CD4-positive, alpha-beta T cell (primary cell): ENCODE measurements at regions of chr2 and their contacts with region 1.

Region 1: GRCh38 chr2:143128681-143129580 is at the start of gene ARHGAP15:
- DNase-seq: peak; percentile 55 to 93 (median 67)
- ATAC-seq: peak; percentile 85
- H3K4me3 ChIP-seq: peak within 1 kb of the TSS; percentile 58
- H3K4me3 Mint-ChIP-seq: peak within 1 kb of the TSS; percentile 85
- H3K27ac ChIP-seq: peak within 1 kb of the TSS; percentile 78 to 94
- H3K27ac Mint-ChIP-seq: no peak within 1 kb of the TSS
- H3K4me1 ChIP-seq: peaks cover 52% of the 10 kb centered on the region
- H3K4me1 Mint-ChIP-seq: peaks cover 44% of the 10 kb centered on the region
- H3K27me3 ChIP-seq: no peaks in the 10 kb centered on the region
- H3K27me3 Mint-ChIP-seq: no peaks in the 10 kb centered on the region
- CTCF ChIP-seq: peak; percentile 25
- total RNA-seq, gene ARHGAP15: 158 to 165 TPM

Region 2: DNA sequence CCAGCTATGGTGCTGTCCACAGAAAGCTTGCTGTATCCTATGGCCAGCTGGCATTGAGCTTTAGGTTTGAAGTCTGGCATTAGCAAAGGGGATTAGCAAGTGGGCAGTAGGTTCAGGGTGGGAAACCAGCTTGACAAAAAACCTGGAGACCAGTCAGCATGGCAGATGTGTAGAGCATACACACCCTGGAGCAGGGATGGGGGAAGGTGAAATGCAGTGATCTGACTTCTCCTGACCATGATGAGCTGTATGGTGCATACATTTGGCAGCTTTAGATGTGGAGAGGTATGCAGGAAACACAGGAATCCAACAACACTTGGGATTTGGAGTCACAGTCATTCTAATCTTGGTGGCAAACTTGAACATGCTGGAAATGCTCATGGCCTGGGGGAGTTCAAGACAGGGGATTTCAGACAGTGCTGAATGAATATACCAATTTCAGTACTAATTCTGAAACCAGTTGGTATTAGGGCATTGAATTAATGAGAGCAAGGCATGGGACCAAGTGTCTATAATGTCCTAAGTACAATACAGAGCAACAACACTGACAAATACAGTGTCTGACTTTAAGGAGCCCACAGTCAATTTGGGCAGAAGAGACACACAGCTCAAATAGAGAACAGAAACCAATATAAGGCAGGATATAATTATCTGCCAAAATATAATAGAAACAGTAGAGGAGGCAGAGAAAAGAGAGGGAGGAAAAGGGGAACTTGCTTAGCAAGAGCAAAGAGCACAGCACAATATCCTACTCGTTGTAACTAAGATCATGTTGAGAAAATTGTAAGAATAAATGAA is 12.1 kb after region 1 on chr2:
- CTCF ChIA-PET with region 1: interaction called, 9 read pairs
- POLR2A ChIA-PET with region 1: interaction called, 99 read pairs
- intact Hi-C with region 1: no loop called
- DNase-seq: no peak
- ATAC-seq: no peak
- H3K4me3 ChIP-seq: no peak overlapping the region
- H3K4me3 Mint-ChIP-seq: peak overlapping the region; percentile 80
- H3K27ac ChIP-seq: no peak overlapping the region
- H3K27ac Mint-ChIP-seq: peak overlapping the region; percentile 83
- H3K4me1 ChIP-seq: peaks cover 21% of the 10 kb centered on the region
- H3K4me1 Mint-ChIP-seq: peaks cover 91% of the 10 kb centered on the region
- H3K27me3 ChIP-seq: no peaks in the 10 kb centered on the region
- H3K27me3 Mint-ChIP-seq: no peaks in the 10 kb centered on the region
- CTCF ChIP-seq: no peak

Region 3: GRCh38 chr2:143150287-143150686 is 21.4 kb after region 1 on chr2:
- CTCF ChIA-PET with region 1: interaction called, 4 read pairs
- POLR2A ChIA-PET with region 1: interaction called, 99 read pairs
- intact Hi-C with region 1: loop called (anchors 1 to 2 kb)
- DNase-seq: peak in 4 of 14 experiments; percentile 25 to 44 (median 39)
- ATAC-seq: peak; percentile 51
- H3K4me3 ChIP-seq: peak overlapping the region; percentile 3
- H3K4me3 Mint-ChIP-seq: peak overlapping the region; percentile 62
- H3K27ac ChIP-seq: peak overlapping the region; percentile 13 to 20
- H3K27ac Mint-ChIP-seq: peak overlapping the region; percentile 83
- H3K4me1 ChIP-seq: peaks cover 56% of the 10 kb centered on the region
- H3K4me1 Mint-ChIP-seq: peaks cover 94% of the 10 kb centered on the region
- H3K27me3 ChIP-seq: no peaks in the 10 kb centered on the region
- H3K27me3 Mint-ChIP-seq: no peaks in the 10 kb centered on the region
- CTCF ChIP-seq: no peak

Region 4: DNA sequence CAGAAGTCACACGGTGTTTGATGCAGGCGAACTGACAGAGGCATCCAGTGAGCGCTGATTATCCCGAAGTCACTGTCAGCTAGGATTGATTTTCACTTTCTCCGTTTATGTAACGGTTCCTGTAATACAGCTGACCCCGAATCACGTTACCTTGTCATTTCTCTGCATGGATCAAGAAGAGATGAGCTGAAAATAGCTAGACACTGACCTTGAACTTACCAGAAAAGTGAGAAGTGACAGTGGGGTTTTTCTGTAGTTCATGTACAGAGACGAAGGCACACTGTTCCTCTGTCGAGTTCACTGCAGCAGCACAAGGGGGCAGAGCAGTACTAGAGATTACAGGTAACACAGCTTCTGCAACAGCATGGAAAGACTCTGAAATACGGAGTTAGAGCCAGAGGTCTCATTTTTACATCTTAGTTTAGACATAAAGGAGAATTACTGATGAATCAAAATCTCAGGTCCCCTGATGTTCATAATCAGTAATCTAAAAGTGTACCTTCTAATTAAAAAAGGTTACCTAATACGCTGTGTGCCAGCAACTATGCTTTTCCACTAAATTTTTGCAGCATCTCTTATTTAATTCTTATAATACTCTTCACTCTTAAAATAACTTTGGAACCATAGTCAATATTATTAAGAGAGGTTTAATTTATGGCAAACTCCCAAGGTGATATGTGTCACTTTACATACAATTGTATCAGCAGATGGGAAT is 33.3 kb after region 1 on chr2:
- CTCF ChIA-PET with region 1: interaction called, 19 read pairs
- POLR2A ChIA-PET with region 1: interaction called, 22 read pairs
- intact Hi-C with region 1: loop called in 1 of 2 experiments (anchors 2 kb)
- DNase-seq: peak; percentile 24 to 86 (median 55)
- ATAC-seq: peak; percentile 99
- H3K4me3 ChIP-seq: no peak overlapping the region
- H3K4me3 Mint-ChIP-seq: peak overlapping the region; percentile 2
- H3K27ac ChIP-seq: no peak overlapping the region
- H3K27ac Mint-ChIP-seq: peak overlapping the region; percentile 84
- H3K4me1 ChIP-seq: peaks cover 13% of the 10 kb centered on the region
- H3K4me1 Mint-ChIP-seq: peaks cover 95% of the 10 kb centered on the region
- H3K27me3 ChIP-seq: no peaks in the 10 kb centered on the region
- H3K27me3 Mint-ChIP-seq: no peaks in the 10 kb centered on the region
- CTCF ChIP-seq: peak; percentile 82